HCT116 (cell line): ENCODE measurements at regions of chr6 and their contacts with region 1.

Region 1: GRCh38 chr6:9606435-9607134 is 808.3 kb downstream of the TFAP2A start:
- DNase-seq: no peak
- ATAC-seq: no peak
- H3K4me3 ChIP-seq: no peak overlapping the region
- H3K27ac ChIP-seq: no peak overlapping the region
- H3K4me1 ChIP-seq: no peaks in the 10 kb centered on the region
- H3K27me3 ChIP-seq: no peaks in the 10 kb centered on the region
- CTCF ChIP-seq: no peak
- POLR2A ChIP-seq: no peak
- RAD21 ChIP-seq: no peak

Region 2: GRCh38 chr6:8526624-8527023 is 1080.0 kb before region 1 on chr6:
- CTCF ChIA-PET with region 1: no interaction called
- POLR2A ChIA-PET with region 1: no interaction called
- RAD21 ChIA-PET with region 1: no interaction called
- intact Hi-C with region 1: loop called (anchors 10 kb)
- DNase-seq: no peak
- ATAC-seq: no peak
- H3K4me3 ChIP-seq: no peak overlapping the region
- H3K27ac ChIP-seq: no peak overlapping the region
- H3K4me1 ChIP-seq: no peaks in the 10 kb centered on the region
- H3K27me3 ChIP-seq: no peaks in the 10 kb centered on the region
- CTCF ChIP-seq: no peak
- POLR2A ChIP-seq: no peak
- RAD21 ChIP-seq: no peak

Region 3: DNA sequence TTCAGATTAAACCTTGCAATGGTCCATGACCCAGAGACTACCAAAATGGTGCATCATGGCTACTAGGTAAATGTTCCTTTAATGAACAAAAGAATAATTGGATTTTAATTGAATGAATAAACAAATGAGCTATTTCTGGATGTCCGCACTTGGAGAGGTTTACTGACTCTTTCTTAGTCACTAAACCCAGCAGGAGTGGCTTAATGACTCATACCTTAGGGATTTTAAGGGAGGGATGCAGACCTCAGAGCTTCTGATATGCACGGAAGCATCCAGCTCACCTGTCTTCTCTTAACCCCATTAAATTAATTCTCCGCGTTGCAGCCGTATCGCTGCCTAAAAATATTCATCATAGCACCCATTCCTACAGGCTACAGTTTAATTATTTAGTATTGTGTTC is 201.2 kb before region 1 on chr6:
- CTCF ChIA-PET with region 1: no interaction called
- POLR2A ChIA-PET with region 1: no interaction called
- RAD21 ChIA-PET with region 1: no interaction called
- intact Hi-C with region 1: no loop called
- DNase-seq: peak; percentile 63
- ATAC-seq: peak; percentile 94
- H3K4me3 ChIP-seq: peak overlapping the region in 1 of 2 experiments; percentile 0; a peak in 1 of 4 replicates
- H3K27ac ChIP-seq: no peak overlapping the region
- H3K4me1 ChIP-seq: peaks cover 8 to 20% of the 10 kb centered on the region in 2 experiments; a peak in 3 of 4 replicates
- H3K27me3 ChIP-seq: peaks cover 10% of the 10 kb centered on the region; the same call in 1 of the 2 replicates
- CTCF ChIP-seq: no peak
- POLR2A ChIP-seq: no peak
- RAD21 ChIP-seq: no peak